ENCODE measurements at regions of chr3 and their contacts with region 1.

Region 1: DNA sequence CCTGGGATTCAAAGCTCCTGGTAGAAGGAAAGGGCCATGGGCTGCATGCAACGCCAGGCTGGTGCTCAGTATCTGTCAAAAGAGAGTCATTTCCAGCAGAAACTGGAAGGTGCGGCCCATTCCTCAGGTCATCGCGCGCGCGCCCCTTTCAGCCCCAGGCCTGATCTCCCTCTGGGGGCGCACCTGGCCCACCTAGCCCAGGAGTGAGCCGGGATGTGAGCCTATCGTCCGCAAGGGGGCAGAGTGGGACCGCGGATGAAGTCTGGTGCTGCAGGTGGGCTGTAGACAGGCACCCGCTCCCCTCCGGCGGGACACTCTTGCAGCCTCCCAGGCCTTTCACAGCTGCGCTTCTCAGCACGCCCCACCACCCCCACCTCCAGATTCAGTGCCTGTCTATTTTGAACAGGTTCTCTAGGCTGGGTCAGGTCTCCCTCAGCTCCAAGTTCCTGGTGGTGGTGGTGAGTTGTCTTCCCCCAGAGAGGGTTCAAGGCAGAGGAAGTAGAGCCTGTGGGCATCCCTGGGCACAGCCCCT is 5.8 kb upstream of the RPL29 start:
- DNase-seq: peak; percentile 59
- ATAC-seq: peak; percentile 96
- H3K4me3 ChIP-seq: no peak overlapping the region
- H3K27ac ChIP-seq: no peak overlapping the region; the same call in 1 of the 2 replicates
- H3K4me1 ChIP-seq: peaks cover 11 to 35% of the 10 kb centered on the region in 2 experiments
- H3K27me3 ChIP-seq: no peaks in the 10 kb centered on the region
- CTCF ChIP-seq: peak in 2 of 3 experiments; percentile 95 to 98; a peak in 4 of 6 replicates
- POLR2A ChIP-seq: no peak
- RAD21 ChIP-seq: no peak

Region 2: DNA sequence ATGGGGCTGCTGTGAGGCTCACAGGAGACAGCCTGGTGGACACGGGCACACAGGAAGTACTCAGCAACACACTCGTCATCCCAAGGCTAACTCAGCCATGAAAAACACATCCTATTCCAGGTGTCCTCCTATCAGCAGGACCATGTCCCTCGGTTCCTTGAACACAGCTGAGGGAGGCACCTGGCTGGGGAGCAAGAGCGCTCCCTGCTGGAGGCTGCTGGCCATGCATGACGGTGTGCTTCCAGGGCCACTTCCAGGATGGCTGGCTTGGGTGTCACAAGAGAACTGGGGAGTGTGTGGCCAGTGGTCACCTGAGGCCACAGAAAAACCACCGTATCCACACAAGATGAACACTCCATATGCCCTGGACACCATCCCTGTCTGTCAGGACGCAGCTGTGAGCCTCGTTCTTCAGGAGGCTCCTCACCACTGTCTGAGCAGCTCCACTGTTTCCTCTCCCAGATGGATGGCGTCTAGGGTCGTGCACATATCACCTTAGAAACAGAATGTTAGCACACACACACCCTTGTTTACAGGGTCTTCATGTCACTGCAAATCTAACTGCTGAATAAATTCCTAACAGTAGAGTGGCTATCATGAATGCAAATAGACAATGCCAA is 121.7 kb after region 1 on chr3:
- CTCF ChIA-PET with region 1: interaction called, 13 read pairs
- POLR2A ChIA-PET with region 1: no interaction called
- RAD21 ChIA-PET with region 1: no interaction called
- intact Hi-C with region 1: loop called (anchors 1 kb)
- DNase-seq: peak; percentile 37
- ATAC-seq: peak; percentile 86
- H3K4me3 ChIP-seq: no peak overlapping the region
- H3K27ac ChIP-seq: no peak overlapping the region
- H3K4me1 ChIP-seq: peaks cover 16 to 23% of the 10 kb centered on the region in 2 experiments
- H3K27me3 ChIP-seq: no peaks in the 10 kb centered on the region
- CTCF ChIP-seq: peak; percentile 90 to 99 (median 97)
- POLR2A ChIP-seq: no peak
- RAD21 ChIP-seq: peak; percentile 93

Region 3: GRCh38 chr3:52144034-52144795 is 142.7 kb after region 1 on chr3:
- CTCF ChIA-PET with region 1: interaction called, 9 read pairs
- POLR2A ChIA-PET with region 1: no interaction called
- RAD21 ChIA-PET with region 1: interaction called in 1 of 2 experiments, 4 read pairs
- intact Hi-C with region 1: loop called (anchors 1 kb)
- DNase-seq: peak; percentile 34
- ATAC-seq: peak; percentile 95
- H3K4me3 ChIP-seq: no peak overlapping the region
- H3K27ac ChIP-seq: no peak overlapping the region
- H3K4me1 ChIP-seq: peaks cover 0 to 4% of the 10 kb centered on the region in 2 experiments; a peak in 1 of 4 replicates
- H3K27me3 ChIP-seq: no peaks in the 10 kb centered on the region
- CTCF ChIP-seq: peak; percentile 92 to 97 (median 94)
- POLR2A ChIP-seq: no peak
- RAD21 ChIP-seq: peak; percentile 96

Region 4: GRCh38 chr3:52210550-52211046 is 209.1 kb after region 1 on chr3:
- CTCF ChIA-PET with region 1: no interaction called
- POLR2A ChIA-PET with region 1: no interaction called
- RAD21 ChIA-PET with region 1: no interaction called
- intact Hi-C with region 1: no loop called
- DNase-seq: no peak
- ATAC-seq: no peak
- H3K4me3 ChIP-seq: no peak overlapping the region
- H3K27ac ChIP-seq: no peak overlapping the region
- H3K4me1 ChIP-seq: no peaks in the 10 kb centered on the region
- H3K27me3 ChIP-seq: no peaks in the 10 kb centered on the region
- CTCF ChIP-seq: no peak
- POLR2A ChIP-seq: no peak
- RAD21 ChIP-seq: no peak

Measured in HCT116 (cell line).